Cardiac septum (tissue), 1 donor: ENCODE measurements at regions of chr18 and their contacts with region 1.

Region 1: DNA sequence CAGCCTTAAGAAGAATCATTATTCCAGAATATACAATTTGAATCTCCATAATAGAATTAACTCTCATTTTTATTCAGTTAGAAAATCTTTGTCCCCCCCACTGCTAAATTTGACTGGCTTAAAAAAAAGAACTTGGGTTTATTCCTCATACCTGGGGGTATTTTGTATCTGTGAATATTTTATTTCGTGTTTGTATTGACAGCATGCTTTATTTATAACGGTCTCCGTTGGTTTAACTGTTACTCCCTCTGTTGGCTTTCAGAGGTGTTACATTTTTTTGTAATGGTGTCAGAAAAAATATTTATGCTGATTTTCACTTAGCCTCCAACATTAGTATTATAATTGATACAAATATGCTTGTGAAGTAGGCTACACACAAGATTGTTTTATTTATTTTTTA is 109.1 kb downstream of the HAUS1 start:
- DNase-seq: no peak

Region 2: GRCh38 chr18:46264235-46264893 is 51.1 kb after region 1 on chr18:
- intact Hi-C with region 1: loop called (anchors 10 kb)
- DNase-seq: no peak